ENCODE measurements at regions of chr15 and their contacts with region 1.

Region 1: DNA sequence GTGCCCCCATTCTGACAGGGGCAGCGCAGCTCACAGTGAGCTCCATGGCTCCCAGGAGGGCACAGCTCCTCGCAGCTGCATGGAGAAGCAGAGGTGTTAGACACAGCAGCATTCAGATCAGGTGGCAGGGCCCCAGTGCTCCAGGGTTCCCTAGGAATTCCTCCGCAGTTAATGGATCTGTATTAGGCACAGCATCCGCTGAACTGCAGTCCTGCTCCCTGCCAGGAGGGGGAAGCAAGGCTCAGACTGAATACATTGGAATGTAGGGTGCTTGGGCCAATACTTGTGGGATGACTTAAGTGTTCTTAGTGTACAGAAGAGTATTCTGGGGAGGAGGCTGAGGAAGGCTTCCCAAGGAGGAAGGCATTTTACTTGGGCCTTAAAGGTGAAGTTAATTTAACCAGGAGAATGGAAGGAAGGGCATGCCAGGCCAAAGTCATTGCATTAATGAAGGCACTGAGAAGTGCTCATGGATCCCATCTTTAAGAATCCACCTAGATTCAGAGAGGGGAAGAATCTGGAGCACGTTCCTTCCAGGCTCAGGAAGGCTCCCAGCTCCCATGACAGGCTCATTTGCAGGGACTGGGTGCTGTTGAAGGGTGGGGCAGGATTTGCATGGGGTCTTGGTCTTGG is 111.6 kb downstream of the RAB11A start:
- DNase-seq: peak; percentile 84
- H3K4me3 Mint-ChIP-seq: peak overlapping the region; percentile 73
- H3K27ac Mint-ChIP-seq: peak overlapping the region; percentile 70
- H3K4me1 Mint-ChIP-seq: peaks cover 24% of the 10 kb centered on the region
- H3K27me3 Mint-ChIP-seq: peaks cover 22% of the 10 kb centered on the region
- CTCF ChIP-seq: peak; percentile 88

Region 2: DNA sequence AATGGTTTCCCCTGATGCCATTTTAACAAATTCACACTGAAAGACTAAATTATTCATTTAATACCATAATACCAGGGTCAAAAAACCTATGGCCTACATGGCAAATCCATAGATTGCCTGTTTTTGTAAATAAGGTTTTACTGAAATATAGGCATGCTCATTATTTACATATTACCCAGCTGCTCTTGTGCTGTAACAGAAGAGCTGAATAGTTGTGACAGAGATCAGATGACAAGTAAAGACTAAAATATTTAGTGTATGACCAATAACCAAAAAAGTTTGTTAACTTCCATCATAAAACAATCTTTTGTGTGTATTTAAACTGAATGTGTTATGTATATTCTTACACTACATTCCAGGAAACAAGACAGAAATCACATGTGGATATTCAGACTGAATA is 249.0 kb before region 1 on chr15:
- CTCF ChIA-PET with region 1: interaction called, 12 read pairs
- intact Hi-C with region 1: no loop called
- DNase-seq: no peak
- H3K4me3 Mint-ChIP-seq: no peak overlapping the region
- H3K27ac Mint-ChIP-seq: no peak overlapping the region
- H3K4me1 Mint-ChIP-seq: no peaks in the 10 kb centered on the region
- H3K27me3 Mint-ChIP-seq: no peaks in the 10 kb centered on the region
- CTCF ChIP-seq: no peak

Region 3: DNA sequence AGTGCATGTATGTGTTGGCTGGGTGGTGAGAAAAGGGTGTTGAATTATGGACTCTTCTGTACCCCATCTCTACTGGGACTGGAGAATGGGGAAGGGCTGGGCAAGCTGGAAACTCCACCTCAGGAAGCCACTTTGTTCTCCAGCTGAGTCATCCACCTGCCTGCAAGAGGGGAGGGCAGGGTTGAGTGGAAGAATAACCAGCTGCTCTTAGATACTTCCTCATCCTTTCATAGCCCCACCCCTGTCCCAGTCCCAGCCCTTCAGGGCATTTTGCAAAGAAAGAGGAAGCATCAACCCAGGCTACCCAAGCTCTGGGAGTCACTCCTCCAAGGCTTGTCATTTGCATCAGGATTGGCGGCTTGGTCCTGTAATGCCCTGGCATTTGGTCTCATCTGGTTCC is 78.6 kb before region 1 on chr15:
- CTCF ChIA-PET with region 1: no interaction called
- intact Hi-C with region 1: no loop called
- DNase-seq: peak; percentile 92
- H3K4me3 Mint-ChIP-seq: peak overlapping the region; percentile 39
- H3K27ac Mint-ChIP-seq: peak overlapping the region; percentile 72
- H3K4me1 Mint-ChIP-seq: peaks cover 62% of the 10 kb centered on the region
- H3K27me3 Mint-ChIP-seq: no peaks in the 10 kb centered on the region
- CTCF ChIP-seq: no peak

Region 4: DNA sequence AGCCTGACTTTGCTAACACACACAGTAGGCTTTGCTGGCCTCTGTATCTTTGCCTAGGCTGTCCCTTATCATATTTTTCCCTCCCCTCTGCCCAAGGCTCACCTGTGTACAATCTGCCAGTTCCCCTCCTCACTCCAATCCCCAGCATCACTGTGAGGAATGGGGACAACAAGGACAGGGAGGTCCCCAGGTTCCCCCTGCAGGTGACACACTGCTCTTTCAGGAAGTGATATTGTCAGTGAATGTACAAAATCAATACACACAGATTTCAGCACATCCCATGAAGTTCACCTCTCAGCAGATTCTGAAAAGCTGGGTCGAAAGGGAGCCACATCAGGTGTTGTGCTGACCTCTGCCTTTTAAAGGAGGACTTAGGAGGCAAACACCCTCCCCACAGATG is 65.8 kb after region 1 on chr15:
- CTCF ChIA-PET with region 1: no interaction called
- intact Hi-C with region 1: loop called (anchors 1 kb)
- DNase-seq: peak; percentile 52
- H3K4me3 Mint-ChIP-seq: no peak overlapping the region
- H3K27ac Mint-ChIP-seq: no peak overlapping the region
- H3K4me1 Mint-ChIP-seq: no peaks in the 10 kb centered on the region
- H3K27me3 Mint-ChIP-seq: peaks cover 14% of the 10 kb centered on the region
- CTCF ChIP-seq: peak; percentile 71

Region 5: GRCh38 chr15:66188464-66188863 is 207.5 kb after region 1 on chr15:
- CTCF ChIA-PET with region 1: no interaction called
- intact Hi-C with region 1: loop called (anchors 1 kb)
- DNase-seq: no peak
- H3K4me3 Mint-ChIP-seq: no peak overlapping the region
- H3K27ac Mint-ChIP-seq: no peak overlapping the region
- H3K4me1 Mint-ChIP-seq: no peaks in the 10 kb centered on the region
- H3K27me3 Mint-ChIP-seq: peaks cover 63% of the 10 kb centered on the region
- CTCF ChIP-seq: no peak

Region 6: GRCh38 chr15:66251065-66251789 is 270.3 kb after region 1 on chr15:
- CTCF ChIA-PET with region 1: interaction called, 13 read pairs
- intact Hi-C with region 1: no loop called
- DNase-seq: no peak
- H3K4me3 Mint-ChIP-seq: no peak overlapping the region
- H3K27ac Mint-ChIP-seq: no peak overlapping the region
- H3K4me1 Mint-ChIP-seq: peaks cover 9% of the 10 kb centered on the region
- H3K27me3 Mint-ChIP-seq: peaks cover 83% of the 10 kb centered on the region
- CTCF ChIP-seq: no peak

Region 7: GRCh38 chr15:66287461-66288057 is 306.6 kb after region 1 on chr15:
- CTCF ChIA-PET with region 1: no interaction called
- intact Hi-C with region 1: loop called (anchors 5 kb)
- DNase-seq: no peak
- H3K4me3 Mint-ChIP-seq: no peak overlapping the region
- H3K27ac Mint-ChIP-seq: no peak overlapping the region
- H3K4me1 Mint-ChIP-seq: peaks cover 16% of the 10 kb centered on the region
- H3K27me3 Mint-ChIP-seq: no peaks in the 10 kb centered on the region
- CTCF ChIP-seq: peak; percentile 58